ENCODE measurements at regions of chr12 and their contacts with region 1.

Region 1: GRCh38 chr12:95117178-95117599 is 43.8 kb upstream of the NR2C1 start:
- DNase-seq: peak; percentile 80
- ATAC-seq: peak; percentile 93

Region 2: GRCh38 chr12:95336390-95337067 is 219.3 kb after region 1 on chr12:
- intact Hi-C with region 1: loop called (anchors 5 kb)
- DNase-seq: peak; percentile 79
- ATAC-seq: peak; percentile 97

Region 3: DNA sequence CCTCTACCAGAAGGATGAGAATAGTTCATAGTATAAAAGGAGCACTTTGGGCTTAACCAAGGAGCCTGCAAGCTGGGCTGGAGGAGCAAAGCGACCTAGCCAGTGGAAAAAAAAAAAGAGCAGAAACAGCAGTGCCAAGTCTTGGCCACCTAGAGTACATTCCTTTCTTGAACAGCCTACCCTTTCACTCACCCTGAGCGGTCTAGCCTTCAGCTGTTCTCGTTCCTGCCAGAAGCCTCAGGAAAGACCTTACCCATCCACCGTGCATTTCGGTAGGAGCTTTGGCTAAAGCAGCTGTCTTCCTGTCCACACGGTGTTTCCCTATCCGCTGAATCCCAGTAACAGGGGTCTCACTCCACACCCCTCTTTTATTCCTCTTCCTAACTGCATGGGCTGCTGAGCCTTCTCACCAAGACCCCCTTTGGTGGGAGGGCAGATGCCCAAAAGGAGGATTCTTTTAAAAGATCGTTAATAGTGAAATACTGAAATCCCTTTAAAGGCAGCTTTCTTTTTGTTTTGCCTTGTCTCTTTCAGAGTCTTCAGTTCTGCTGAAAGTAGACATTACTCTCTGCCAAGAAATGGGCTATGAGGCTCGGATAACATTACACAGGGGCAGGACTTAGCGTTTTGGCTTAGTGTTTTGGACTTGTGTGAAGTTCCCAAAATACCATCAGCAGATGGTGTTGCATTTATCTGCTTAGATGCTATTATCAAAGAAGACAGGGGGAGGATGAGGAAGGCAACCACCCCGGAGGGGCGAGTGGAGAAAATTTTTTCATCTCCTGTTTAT is 268.3 kb after region 1 on chr12:
- intact Hi-C with region 1: no loop called
- DNase-seq: no peak
- ATAC-seq: peak; percentile 93

Region 4: GRCh38 chr12:95532851-95533250 is 415.7 kb after region 1 on chr12:
- intact Hi-C with region 1: loop called (anchors 10 kb)
- DNase-seq: no peak
- ATAC-seq: no peak